H1 (cell line): ENCODE measurements at regions of chr11 and their contacts with region 1.

Region 1: DNA sequence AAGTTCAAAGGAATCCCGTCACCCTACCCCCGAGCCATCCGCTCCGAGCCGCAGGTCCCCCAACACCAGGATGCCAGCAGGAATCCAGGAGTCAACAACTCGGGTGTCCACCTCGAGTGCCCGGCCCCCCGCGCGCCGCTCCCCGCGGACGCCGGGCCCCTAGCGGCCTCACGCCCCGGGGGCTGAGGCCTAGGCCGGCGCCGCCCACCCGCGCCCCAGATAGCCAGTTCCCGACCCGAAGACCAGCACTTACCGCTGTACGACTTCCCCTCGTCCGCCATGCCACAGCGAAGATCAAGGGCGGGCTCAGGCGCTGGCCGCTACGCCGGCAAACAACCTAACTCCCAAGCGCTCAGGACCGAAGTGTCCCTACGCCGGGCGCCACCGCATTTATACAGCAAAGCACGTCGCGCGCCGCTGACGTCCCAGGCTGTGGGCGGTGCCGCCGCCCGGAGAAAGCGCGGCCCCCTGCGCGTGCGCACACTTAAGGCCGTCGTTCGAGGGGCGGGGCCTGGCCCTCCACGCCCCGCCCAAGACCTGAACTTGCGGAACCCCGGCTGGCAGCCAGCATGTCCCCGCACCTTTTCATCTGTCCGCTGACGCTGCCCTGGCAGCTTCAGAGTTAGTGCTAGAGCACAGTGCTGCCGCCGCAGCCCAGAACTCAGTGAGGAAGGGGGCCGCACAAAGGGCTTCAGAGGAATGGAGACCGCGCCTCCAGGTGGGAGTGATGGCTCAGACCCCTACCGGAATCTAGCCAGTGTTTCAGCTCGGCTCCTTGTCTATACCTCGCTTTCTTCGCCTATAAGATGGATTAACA is at the start of gene NXF1:
- DNase-seq: peak; percentile 96 to 100
- H3K4me3 ChIP-seq: peak within 1 kb of the TSS; percentile 66 to 85 (median 81)
- H3K27ac ChIP-seq: peak within 1 kb of the TSS; percentile 48; the same call in 1 of the 2 replicates
- H3K4me1 ChIP-seq: peaks cover 0 to 5% (median under 1%) of the 10 kb centered on the region in 4 experiments; a peak in 1 of 7 replicates
- H3K27me3 ChIP-seq: no peaks in the 10 kb centered on the region
- CTCF ChIP-seq: peak in 1 of 3 experiments; percentile 20; a peak in 1 of 4 replicates
- EP300 ChIP-seq: peak in 1 of 2 experiments; percentile 65; a peak in 1 of 3 replicates
- POLR2A ChIP-seq: peak; percentile 100
- RAD21 ChIP-seq: 0 out of 4 replicates have a peak, but pooled peaks of 1 of the 2 experiments have one; percentile 4
- total RNA-seq, gene NXF1: 44.8 and 49.8 TPM in 2 replicates

Region 2: DNA sequence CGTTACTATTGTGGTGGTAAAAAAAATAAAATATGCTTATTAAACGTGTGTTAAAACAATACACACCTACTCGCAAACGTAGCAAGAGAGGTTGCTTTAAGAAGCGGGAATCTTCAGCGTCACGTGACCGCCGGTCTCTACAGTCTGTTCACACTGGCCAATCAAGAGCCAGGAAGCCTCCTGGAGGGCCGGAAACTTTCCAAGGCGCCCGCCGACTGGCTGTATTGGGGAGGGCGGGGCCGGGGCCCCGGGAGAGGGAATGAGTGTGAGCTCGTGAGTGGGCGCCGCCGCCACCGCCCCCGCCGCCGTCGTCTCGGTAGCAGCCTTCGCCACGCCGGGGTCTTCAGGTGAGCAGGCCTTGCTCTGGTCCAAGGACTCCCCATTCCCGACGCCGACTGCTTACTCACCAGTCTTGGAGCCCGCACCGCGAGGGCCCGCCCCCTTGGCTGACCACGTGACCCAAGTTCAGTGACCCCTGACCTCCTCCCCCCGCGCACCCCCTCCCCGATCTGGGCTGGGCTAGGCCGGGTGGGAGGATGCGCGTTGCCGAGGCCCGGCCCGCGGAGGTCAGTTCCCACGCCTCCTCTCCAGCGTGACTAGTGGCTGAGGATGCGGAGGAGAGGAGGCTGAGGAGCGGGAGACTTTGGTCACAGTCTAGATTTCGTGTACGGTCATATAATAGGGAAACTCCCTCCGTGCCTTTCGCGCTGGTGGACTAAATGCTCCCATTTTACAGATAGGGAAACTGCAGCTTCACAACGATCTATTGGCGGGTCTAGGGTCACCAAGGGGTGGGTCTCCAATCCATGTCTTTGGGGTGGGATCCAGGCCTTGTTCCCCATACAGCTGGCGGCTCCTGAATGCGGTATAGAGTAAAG is 33.9 kb before region 1 on chr11 and contains the start of gene TAF6L:
- CTCF ChIA-PET with region 1: interaction called, 3 read pairs
- POLR2A ChIA-PET with region 1: interaction called, 15 read pairs
- DNase-seq: peak; percentile 75 to 98
- H3K4me3 ChIP-seq: peak within 1 kb of the TSS; percentile 77 to 95 (median 92)
- H3K27ac ChIP-seq: peak within 1 kb of the TSS; percentile 72
- H3K4me1 ChIP-seq: peaks cover 0 to 9% (median 5%) of the 10 kb centered on the region in 4 experiments; a peak in 6 of 7 replicates
- H3K27me3 ChIP-seq: no peaks in the 10 kb centered on the region
- CTCF ChIP-seq: no peak
- EP300 ChIP-seq: no peak
- POLR2A ChIP-seq: peak; percentile 78 to 95
- RAD21 ChIP-seq: no peak
- total RNA-seq, gene TAF6L: 29.6 and 31.9 TPM in 2 replicates

Region 3: GRCh38 chr11:62816557-62816956 is 11.3 kb after region 1 on chr11:
- CTCF ChIA-PET with region 1: interaction called, 3 read pairs
- POLR2A ChIA-PET with region 1: interaction called, 57 read pairs
- DNase-seq: no peak
- H3K4me3 ChIP-seq: no peak overlapping the region
- H3K27ac ChIP-seq: no peak overlapping the region
- H3K4me1 ChIP-seq: no peaks in the 10 kb centered on the region
- H3K27me3 ChIP-seq: no peaks in the 10 kb centered on the region
- CTCF ChIP-seq: no peak
- EP300 ChIP-seq: no peak
- POLR2A ChIP-seq: no peak
- RAD21 ChIP-seq: no peak

Region 4: GRCh38 chr11:62831520-62832335 is 26.4 kb after region 1 on chr11 and contains the start of gene STX5:
- CTCF ChIA-PET with region 1: interaction called, 4 read pairs
- POLR2A ChIA-PET with region 1: interaction called, 41 read pairs
- DNase-seq: peak; percentile 96 to 99
- H3K4me3 ChIP-seq: peak within 1 kb of the TSS; percentile 76 to 94 (median 92)
- H3K27ac ChIP-seq: peak within 1 kb of the TSS; percentile 95
- H3K4me1 ChIP-seq: peaks cover 0 to 17% (median 2%) of the 10 kb centered on the region in 4 experiments; a peak in 2 of 7 replicates
- H3K27me3 ChIP-seq: no peaks in the 10 kb centered on the region
- CTCF ChIP-seq: no peak
- EP300 ChIP-seq: no peak
- POLR2A ChIP-seq: peak; percentile 53 to 96; a peak in 2 of 3 replicates
- RAD21 ChIP-seq: no peak
- total RNA-seq, gene STX5: 24.2 and 25.3 TPM in 2 replicates

Region 5: DNA sequence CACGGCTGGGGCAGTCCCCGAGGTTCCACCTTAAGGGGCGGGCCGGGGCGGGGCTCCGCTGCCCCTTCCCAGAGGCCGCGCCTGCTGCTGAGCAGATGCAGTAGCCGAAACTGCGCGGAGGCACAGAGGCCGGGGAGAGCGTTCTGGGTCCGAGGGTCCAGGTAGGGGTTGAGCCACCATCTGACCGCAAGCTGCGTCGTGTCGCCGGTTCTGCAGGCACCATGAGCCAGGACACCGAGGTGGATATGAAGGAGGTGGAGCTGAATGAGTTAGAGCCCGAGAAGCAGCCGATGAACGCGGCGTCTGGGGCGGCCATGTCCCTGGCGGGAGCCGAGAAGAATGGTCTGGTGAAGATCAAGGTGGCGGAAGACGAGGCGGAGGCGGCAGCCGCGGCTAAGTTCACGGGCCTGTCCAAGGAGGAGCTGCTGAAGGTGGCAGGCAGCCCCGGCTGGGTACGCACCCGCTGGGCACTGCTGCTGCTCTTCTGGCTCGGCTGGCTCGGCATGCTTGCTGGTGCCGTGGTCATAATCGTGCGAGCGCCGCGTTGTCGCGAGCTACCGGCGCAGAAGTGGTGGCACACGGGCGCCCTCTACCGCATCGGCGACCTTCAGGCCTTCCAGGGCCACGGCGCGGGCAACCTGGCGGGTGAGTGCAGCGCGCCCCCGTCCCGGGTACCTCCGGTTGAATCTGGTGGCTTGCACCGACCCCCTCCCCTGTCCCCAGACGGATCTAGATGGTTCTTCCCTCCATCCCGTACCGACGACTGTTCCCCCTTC is 75.7 kb after region 1 on chr11 and contains the start of gene SLC3A2:
- CTCF ChIA-PET with region 1: no interaction called
- POLR2A ChIA-PET with region 1: interaction called, 43 read pairs
- DNase-seq: peak; percentile 56 to 88
- H3K4me3 ChIP-seq: peak within 1 kb of the TSS; percentile 67 to 97 (median 88)
- H3K27ac ChIP-seq: peak within 1 kb of the TSS; percentile 98
- H3K4me1 ChIP-seq: peaks cover 0 to 30% (median 12%) of the 10 kb centered on the region in 4 experiments; a peak in 5 of 7 replicates
- H3K27me3 ChIP-seq: no peaks in the 10 kb centered on the region
- CTCF ChIP-seq: peak; percentile 60 to 82 (median 71)
- EP300 ChIP-seq: no peak
- POLR2A ChIP-seq: peak; percentile 97 to 99
- RAD21 ChIP-seq: peak; percentile 39 to 55
- total RNA-seq, gene SLC3A2: 393 and 410 TPM in 2 replicates